Activated CD4-positive, alpha-beta memory T cell treated with anti-CD3 and anti-CD28 coated beads for 36 hours (primary cell): ENCODE measurements at regions of chr9 and their contacts with region 1.

Region 1: DNA sequence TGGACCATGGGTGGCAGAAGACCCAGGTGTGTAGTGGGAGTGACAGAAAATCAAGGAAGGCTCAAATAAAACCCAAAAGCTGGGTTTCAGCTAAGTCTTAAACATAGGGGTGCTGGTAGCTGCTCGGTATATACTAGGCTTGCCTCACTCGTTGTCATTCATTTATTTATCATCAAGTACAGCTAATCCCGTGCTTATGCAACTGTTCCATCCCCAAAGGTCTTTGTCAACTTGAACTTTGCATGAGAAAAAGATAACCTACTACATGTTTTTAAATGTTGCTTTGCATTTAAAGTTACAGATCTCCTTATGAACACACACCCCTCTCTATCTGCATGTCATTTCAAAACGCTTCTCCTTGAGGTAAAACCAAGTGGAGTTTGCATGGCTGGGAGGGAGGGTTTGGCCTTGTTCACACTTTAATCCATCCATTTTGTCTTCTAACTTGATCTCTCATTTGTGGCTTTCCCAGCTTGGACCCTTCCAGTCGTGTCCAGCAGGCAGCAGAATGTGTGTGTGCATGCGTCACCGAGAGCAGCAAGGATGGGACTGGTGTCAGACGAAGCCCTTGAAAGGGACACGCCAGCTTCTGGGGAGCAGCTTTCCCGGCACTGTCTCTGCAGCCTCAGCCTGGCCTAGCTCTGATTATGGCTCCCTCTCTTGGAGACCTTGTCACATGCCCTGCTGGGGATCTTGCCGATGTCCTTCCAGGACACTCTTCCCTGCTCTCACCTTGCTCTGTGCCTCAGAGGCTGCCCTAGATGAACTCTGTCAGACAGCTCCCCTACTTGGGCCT is 133.5 kb downstream of the GADD45G start:
- DNase-seq: no peak
- H3K4me3 Mint-ChIP-seq: no peak overlapping the region
- H3K27ac Mint-ChIP-seq: no peak overlapping the region
- H3K4me1 Mint-ChIP-seq: peaks cover 48% of the 10 kb centered on the region
- H3K27me3 Mint-ChIP-seq: no peaks in the 10 kb centered on the region

Region 2: GRCh38 chr9:89701221-89701798 is 37.0 kb before region 1 on chr9:
- CTCF ChIA-PET with region 1: no interaction called
- POLR2A ChIA-PET with region 1: interaction called, 3 read pairs
- intact Hi-C with region 1: loop called (anchors 1 kb)
- DNase-seq: peak; percentile 93
- H3K4me3 Mint-ChIP-seq: peak overlapping the region; percentile 52
- H3K27ac Mint-ChIP-seq: peak overlapping the region; percentile 34
- H3K4me1 Mint-ChIP-seq: peaks cover 44% of the 10 kb centered on the region
- H3K27me3 Mint-ChIP-seq: no peaks in the 10 kb centered on the region

Region 3: DNA sequence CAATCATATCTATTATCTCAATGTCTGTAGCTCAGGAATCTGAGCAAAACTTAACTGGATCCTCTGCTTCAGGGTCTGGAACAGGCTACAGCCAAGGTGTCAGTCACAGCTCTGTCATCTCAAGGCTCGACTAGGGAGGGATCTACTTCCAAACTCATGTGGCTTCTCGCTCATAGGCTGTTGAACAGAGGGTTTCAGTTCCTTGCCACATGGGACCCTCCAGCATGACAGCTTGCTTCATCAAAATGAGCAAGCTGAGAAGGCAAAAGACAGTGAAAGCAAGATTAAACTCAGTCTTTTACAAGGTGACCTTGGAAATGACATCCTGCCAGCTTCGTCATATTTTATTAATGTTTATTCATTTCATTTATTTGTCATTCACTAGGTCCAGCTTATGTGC is 21.8 kb before region 1 on chr9:
- CTCF ChIA-PET with region 1: no interaction called
- POLR2A ChIA-PET with region 1: interaction called, 3 read pairs
- intact Hi-C with region 1: loop called (anchors 1 kb)
- DNase-seq: no peak
- H3K4me3 Mint-ChIP-seq: no peak overlapping the region
- H3K27ac Mint-ChIP-seq: no peak overlapping the region
- H3K4me1 Mint-ChIP-seq: peaks cover 29% of the 10 kb centered on the region
- H3K27me3 Mint-ChIP-seq: no peaks in the 10 kb centered on the region

Region 4: DNA sequence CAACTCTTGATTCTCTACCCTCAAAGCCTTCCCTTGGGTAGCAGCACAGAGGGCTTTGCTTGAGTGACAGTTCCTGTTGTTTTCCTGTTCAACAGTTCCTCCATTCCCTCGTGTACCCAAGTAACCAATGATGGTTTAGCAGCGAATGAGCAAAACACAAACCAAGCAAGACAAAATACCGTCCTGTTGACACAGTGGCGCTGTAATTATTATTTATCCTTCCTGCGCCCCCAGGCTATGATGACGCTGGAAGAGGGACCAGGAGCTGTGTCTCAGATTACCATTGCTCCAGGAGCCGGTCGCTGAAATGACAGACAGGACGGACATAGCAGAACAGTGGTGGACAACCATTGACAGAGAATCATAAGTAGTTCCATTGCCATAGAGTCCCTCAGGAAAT is 21.2 kb after region 1 on chr9:
- CTCF ChIA-PET with region 1: no interaction called
- POLR2A ChIA-PET with region 1: no interaction called
- intact Hi-C with region 1: no loop called
- DNase-seq: no peak
- H3K4me3 Mint-ChIP-seq: no peak overlapping the region
- H3K27ac Mint-ChIP-seq: no peak overlapping the region
- H3K4me1 Mint-ChIP-seq: no peaks in the 10 kb centered on the region
- H3K27me3 Mint-ChIP-seq: no peaks in the 10 kb centered on the region

Region 5: DNA sequence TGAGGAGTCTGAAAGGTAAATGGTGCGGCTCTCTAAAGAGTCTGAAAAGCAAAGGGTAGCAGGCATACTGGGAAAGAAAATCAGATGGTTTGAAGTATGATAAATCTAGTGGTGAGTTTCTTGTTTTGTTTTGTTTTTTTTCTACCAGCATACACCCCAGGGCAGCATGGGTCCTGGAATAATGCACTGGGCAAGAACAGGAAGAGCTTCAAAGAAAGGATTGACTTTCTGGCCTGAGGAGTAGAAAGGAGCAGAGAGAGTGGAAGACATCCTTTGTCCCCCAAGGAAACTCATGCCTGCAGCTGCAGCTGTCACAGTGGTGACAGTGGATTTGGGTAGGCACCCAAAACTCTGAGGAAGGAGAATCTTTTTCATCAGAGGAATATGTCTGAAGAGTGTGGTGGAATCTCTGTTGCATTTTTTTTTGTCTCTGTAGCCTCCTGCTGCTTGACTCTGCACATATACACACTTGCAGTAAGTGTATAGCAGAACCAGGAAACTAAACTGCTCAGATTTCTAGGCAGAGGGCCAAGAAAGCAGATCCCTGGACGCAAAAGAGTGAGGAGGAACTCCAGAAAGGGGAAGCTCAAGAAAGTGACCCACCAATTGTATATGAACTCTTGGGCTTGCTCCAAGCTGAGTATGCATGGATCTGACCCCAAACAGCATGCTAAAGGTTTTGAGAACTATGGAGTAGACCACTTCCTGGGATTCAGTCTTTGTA is 48.2 kb after region 1 on chr9:
- CTCF ChIA-PET with region 1: no interaction called
- POLR2A ChIA-PET with region 1: no interaction called
- intact Hi-C with region 1: loop called (anchors 5 kb)
- DNase-seq: no peak
- H3K4me3 Mint-ChIP-seq: no peak overlapping the region
- H3K27ac Mint-ChIP-seq: no peak overlapping the region
- H3K4me1 Mint-ChIP-seq: peaks cover 2% of the 10 kb centered on the region
- H3K27me3 Mint-ChIP-seq: no peaks in the 10 kb centered on the region

Region 6: DNA sequence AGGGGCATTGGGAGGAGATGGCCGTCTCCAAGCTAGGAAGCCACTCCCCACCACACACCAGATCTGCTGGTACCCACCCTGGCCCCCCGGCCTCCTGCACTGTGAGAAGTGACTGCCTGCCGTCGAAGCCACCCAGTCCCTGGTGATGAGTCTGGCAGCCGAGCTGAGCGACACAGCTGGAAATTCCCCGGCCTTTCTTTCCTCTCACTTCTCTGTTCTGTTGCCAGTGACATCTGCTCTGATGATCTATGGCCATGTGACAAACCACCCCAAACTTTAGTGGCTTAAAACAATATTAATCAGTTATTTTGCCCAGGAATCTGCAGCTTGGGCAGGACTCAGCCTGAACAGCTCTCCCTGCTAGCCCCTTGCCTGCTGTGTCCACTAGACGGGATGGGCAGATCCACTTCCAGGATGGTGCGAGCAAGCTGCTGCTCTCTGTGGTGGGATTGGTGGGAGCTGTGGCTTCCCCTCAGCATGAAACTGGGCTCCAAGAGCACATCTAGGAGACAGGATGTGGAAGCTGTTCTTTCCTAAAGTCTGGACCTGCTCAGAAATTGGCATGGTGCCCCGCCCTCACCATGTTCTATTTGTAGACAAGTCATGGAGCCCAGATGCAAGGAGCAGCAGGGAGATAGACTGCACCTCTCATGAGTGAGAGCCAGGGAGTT is 77.7 kb after region 1 on chr9:
- CTCF ChIA-PET with region 1: no interaction called
- POLR2A ChIA-PET with region 1: no interaction called
- intact Hi-C with region 1: no loop called
- DNase-seq: no peak
- H3K4me3 Mint-ChIP-seq: no peak overlapping the region
- H3K27ac Mint-ChIP-seq: no peak overlapping the region
- H3K4me1 Mint-ChIP-seq: peaks cover 2% of the 10 kb centered on the region
- H3K27me3 Mint-ChIP-seq: no peaks in the 10 kb centered on the region

Region 7: DNA sequence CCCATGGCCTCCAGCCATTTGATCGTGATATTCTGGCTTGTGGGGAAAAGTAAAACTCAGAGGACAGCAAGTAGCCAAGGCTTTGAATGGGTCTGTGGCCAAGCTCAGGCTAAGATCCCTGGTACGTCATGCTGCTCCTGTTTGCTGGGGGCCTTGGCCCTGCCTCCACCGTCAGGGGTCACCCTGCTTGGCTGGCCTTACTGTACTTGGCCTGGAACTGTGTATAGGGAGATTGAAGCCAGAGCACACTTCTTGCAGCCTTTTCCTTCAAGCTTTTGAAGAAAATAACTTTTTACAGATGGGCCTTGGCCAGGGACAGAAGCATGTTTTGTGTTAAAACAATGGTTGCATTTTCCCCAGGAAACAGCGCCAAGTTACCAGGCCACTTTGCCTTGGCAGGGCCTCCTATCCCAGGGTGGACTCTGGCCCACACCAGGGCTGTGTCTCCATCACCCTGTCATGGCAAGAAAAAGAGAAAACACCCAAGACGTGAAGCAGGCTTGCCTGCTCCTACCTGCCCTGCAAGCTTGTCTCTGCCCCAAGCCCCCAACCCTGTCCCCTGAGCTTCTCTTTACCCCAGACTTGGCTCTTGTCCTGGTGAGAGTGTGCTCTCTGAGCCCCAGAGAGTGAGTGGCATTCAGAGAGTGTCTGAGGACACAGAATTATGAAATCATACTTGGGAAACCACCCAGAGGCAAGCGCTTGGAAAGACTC is 153.4 kb after region 1 on chr9:
- CTCF ChIA-PET with region 1: no interaction called
- POLR2A ChIA-PET with region 1: no interaction called
- intact Hi-C with region 1: no loop called
- DNase-seq: no peak
- H3K4me3 Mint-ChIP-seq: no peak overlapping the region
- H3K27ac Mint-ChIP-seq: no peak overlapping the region
- H3K4me1 Mint-ChIP-seq: no peaks in the 10 kb centered on the region
- H3K27me3 Mint-ChIP-seq: peaks cover 1% of the 10 kb centered on the region

Region 8: GRCh38 chr9:89919169-89919681 is 180.9 kb after region 1 on chr9:
- CTCF ChIA-PET with region 1: interaction called, 7 read pairs
- POLR2A ChIA-PET with region 1: no interaction called
- intact Hi-C with region 1: loop called (anchors 2 kb)
- DNase-seq: peak; percentile 71
- H3K4me3 Mint-ChIP-seq: no peak overlapping the region
- H3K27ac Mint-ChIP-seq: peak overlapping the region; percentile 4
- H3K4me1 Mint-ChIP-seq: peaks cover 15% of the 10 kb centered on the region
- H3K27me3 Mint-ChIP-seq: no peaks in the 10 kb centered on the region